CD4-positive, alpha-beta memory T cell (primary cell): ENCODE measurements at regions of chr14 and their contacts with region 1.

Region 1: DNA sequence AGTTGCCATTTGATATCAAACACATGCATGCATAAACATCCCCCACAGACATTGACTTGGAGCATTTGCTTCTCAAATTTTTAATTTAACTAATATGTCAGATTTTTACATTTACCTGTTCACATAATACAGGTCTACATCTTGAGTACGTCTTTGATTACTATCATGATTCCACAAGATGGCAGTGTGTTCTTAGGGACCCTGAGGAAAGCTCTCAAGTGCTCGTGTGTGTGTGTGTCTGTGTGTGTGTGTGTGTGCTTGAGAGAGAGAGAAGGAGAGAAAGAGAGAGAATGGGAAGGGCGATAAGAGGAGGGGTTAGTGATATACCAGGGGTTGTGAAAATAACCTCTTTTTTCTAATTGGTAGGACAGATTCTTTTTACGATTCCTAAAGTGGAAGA is 167.1 kb upstream of the OR4E1 start:
- DNase-seq: peak in 4 of 5 donors; percentile 17 to 39 (median 28)
- H3K4me3 ChIP-seq: no peak overlapping the region
- H3K4me3 Mint-ChIP-seq: peak overlapping the region; percentile 49 to 79 (median 69)
- H3K27ac ChIP-seq: no peak overlapping the region
- H3K27ac Mint-ChIP-seq: peak overlapping the region in 6 of 7 donors; percentile 39 to 96 (median 62)
- H3K4me1 ChIP-seq: peaks cover 3% of the 10 kb centered on the region
- H3K4me1 Mint-ChIP-seq: peaks cover 0 to 11% (median 2%) of the 10 kb centered on the region in 4 donors
- H3K27me3 ChIP-seq: no peaks in the 10 kb centered on the region
- H3K27me3 Mint-ChIP-seq: peaks cover 16 to 17% of the 10 kb centered on the region in 2 donors

Region 2: GRCh38 chr14:21852061-21852664 is 11.4 kb after region 1 on chr14:
- CTCF ChIA-PET with region 1: interaction called, 15 read pairs
- POLR2A ChIA-PET with region 1: interaction called, 62 read pairs
- intact Hi-C with region 1: no loop called
- DNase-seq: peak; percentile 62 to 69 (median 66)
- H3K4me3 ChIP-seq: peak overlapping the region in 1 of 2 donors; percentile 27
- H3K4me3 Mint-ChIP-seq: peak overlapping the region; percentile 77 to 87 (median 82)
- H3K27ac ChIP-seq: no peak overlapping the region
- H3K27ac Mint-ChIP-seq: peak overlapping the region; percentile 58 to 93 (median 81)
- H3K4me1 ChIP-seq: no peaks in the 10 kb centered on the region
- H3K4me1 Mint-ChIP-seq: peaks cover 5 to 14% (median 9%) of the 10 kb centered on the region in 4 donors
- H3K27me3 ChIP-seq: no peaks in the 10 kb centered on the region
- H3K27me3 Mint-ChIP-seq: peaks cover 5 to 12% of the 10 kb centered on the region in 2 donors

Region 3: DNA sequence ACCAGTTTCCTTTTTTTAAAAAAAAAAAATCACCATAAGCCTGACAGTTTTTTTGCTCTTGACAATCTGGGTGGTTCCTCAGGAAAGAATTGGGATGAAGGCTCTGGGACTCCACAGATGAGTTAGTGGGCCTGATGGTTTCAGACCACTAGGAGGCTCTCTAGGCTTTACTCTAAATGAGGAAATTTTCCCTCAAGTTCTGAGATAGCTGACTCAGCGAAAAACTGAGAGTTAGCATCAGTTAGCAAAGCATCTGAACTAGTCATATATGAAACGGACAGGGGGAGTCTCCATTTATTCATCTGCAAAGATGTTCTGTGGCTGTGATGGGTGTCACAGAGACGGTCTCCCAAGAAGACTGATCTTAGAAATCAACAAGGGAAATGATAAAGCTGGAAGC is 147.2 kb after region 1 on chr14:
- CTCF ChIA-PET with region 1: no interaction called
- POLR2A ChIA-PET with region 1: no interaction called
- intact Hi-C with region 1: no loop called
- DNase-seq: peak in 1 of 5 donors; percentile 24
- H3K4me3 ChIP-seq: no peak overlapping the region
- H3K4me3 Mint-ChIP-seq: peak overlapping the region in 1 of 8 donors; percentile 44
- H3K27ac ChIP-seq: no peak overlapping the region
- H3K27ac Mint-ChIP-seq: peak overlapping the region in 3 of 7 donors; percentile 6 to 70 (median 35)
- H3K4me1 ChIP-seq: no peaks in the 10 kb centered on the region
- H3K4me1 Mint-ChIP-seq: peaks cover 4 to 7% (median 6%) of the 10 kb centered on the region in 4 donors
- H3K27me3 ChIP-seq: no peaks in the 10 kb centered on the region
- H3K27me3 Mint-ChIP-seq: peaks cover 0 to 4% of the 10 kb centered on the region in 2 donors